ENCODE measurements at regions of chr1 and their contacts with region 1.

Region 1: GRCh38 chr1:47192458-47193384 is 2.9 kb upstream of the PDZK1IP1 start:
- DNase-seq: peak; percentile 75
- ATAC-seq: peak; percentile 77
- H3K4me3 Mint-ChIP-seq: no peak overlapping the region
- H3K27ac Mint-ChIP-seq: no peak overlapping the region
- H3K4me1 Mint-ChIP-seq: no peaks in the 10 kb centered on the region
- H3K27me3 Mint-ChIP-seq: peaks cover 3% of the 10 kb centered on the region

Region 2: GRCh38 chr1:46747683-46748288 is 444.9 kb before region 1 on chr1:
- CTCF ChIA-PET with region 1: no interaction called
- POLR2A ChIA-PET with region 1: no interaction called
- DNase-seq: no peak
- ATAC-seq: peak; percentile 49
- H3K4me3 Mint-ChIP-seq: no peak overlapping the region
- H3K27ac Mint-ChIP-seq: no peak overlapping the region
- H3K4me1 Mint-ChIP-seq: no peaks in the 10 kb centered on the region
- H3K27me3 Mint-ChIP-seq: peaks cover 34% of the 10 kb centered on the region

Region 3: DNA sequence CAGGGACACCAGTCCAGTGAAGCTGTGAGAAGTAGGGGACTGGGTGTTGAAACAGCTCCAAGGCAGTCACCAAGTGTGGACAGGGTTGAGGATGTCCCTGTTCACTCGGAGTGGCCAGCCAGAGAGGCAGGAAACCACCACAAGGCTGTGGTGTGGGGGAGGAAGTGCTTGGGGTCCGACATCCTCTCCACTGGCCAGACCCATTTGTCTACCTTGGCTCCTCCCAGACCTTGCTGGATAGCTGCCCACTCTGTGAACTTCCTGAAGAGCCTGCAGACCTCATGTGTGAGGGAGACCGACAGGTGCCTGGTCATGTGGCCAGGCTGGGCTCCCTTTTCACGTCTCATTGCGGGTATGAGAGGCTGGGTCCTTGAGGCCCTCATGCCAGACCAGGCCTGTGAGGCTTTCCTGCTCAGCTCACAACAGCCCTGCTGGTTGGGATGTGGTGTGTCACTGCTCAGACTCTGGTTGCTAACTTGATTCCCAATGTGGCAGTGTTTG is 372.1 kb before region 1 on chr1:
- CTCF ChIA-PET with region 1: no interaction called
- POLR2A ChIA-PET with region 1: no interaction called
- DNase-seq: no peak
- ATAC-seq: no peak
- H3K4me3 Mint-ChIP-seq: no peak overlapping the region
- H3K27ac Mint-ChIP-seq: no peak overlapping the region
- H3K4me1 Mint-ChIP-seq: peaks cover 10% of the 10 kb centered on the region
- H3K27me3 Mint-ChIP-seq: no peaks in the 10 kb centered on the region

Region 4: GRCh38 chr1:47113178-47113577 is 79.5 kb before region 1 on chr1:
- CTCF ChIA-PET with region 1: no interaction called
- POLR2A ChIA-PET with region 1: no interaction called
- DNase-seq: no peak
- ATAC-seq: no peak
- H3K4me3 Mint-ChIP-seq: no peak overlapping the region
- H3K27ac Mint-ChIP-seq: no peak overlapping the region
- H3K4me1 Mint-ChIP-seq: no peaks in the 10 kb centered on the region
- H3K27me3 Mint-ChIP-seq: peaks cover 2% of the 10 kb centered on the region

Region 5: DNA sequence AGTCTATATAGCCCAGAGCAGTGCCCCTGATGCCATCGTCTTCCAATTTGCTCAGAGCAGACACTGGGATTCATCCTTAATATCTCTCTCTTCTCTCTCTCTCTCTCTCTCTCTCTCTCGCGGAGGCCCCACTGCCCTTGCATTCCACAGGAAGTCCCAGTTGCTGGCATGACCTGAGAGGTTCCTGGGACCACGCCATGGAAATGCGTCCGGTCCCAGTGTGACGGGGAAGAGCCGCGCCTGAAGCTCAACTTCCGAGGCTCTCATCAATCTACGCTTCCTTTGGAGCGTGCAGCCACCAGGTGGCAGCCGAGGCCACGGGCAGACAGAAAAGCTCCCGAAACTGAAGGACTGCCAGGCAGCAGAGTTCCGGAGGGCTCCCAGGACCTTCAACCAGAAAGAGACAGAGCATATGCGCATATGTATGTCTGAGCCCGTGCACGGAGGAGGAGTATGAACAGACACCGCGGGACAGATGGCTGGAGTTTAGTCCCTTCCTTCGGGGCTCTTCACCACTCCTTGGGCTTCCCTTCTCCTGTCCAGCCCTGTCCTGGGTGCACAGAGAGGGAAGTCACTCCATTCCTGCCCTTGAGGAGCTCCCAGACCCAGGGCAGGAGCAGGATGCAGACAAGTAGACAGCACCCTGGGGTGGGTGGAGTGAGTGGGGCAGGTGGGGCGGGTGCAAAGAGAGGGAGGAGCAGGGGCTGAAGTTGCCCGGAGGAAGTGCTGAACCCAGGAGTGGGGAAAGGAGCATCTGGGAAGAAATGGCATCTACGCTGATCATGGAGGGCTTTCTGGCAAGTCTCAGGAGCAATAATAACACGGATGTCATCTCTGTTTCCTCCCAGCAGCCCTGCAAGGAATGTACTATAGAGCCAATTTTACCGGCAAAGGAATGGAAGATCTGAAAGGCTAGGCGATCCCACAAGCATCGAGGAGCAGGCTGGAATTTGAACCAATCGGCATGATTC is 13.4 kb before region 1 on chr1:
- CTCF ChIA-PET with region 1: interaction called, 59 read pairs
- POLR2A ChIA-PET with region 1: no interaction called
- DNase-seq: peak; percentile 85
- ATAC-seq: peak; percentile 85
- H3K4me3 Mint-ChIP-seq: peak overlapping the region; percentile 80
- H3K27ac Mint-ChIP-seq: peak overlapping the region; percentile 88
- H3K4me1 Mint-ChIP-seq: peaks cover 8% of the 10 kb centered on the region
- H3K27me3 Mint-ChIP-seq: peaks cover 26% of the 10 kb centered on the region

Region 6: GRCh38 chr1:47226121-47226838 is 33.6 kb after region 1 on chr1:
- CTCF ChIA-PET with region 1: interaction called, 11 read pairs
- POLR2A ChIA-PET with region 1: no interaction called
- DNase-seq: no peak
- ATAC-seq: no peak
- H3K4me3 Mint-ChIP-seq: no peak overlapping the region
- H3K27ac Mint-ChIP-seq: no peak overlapping the region
- H3K4me1 Mint-ChIP-seq: peaks cover 21% of the 10 kb centered on the region
- H3K27me3 Mint-ChIP-seq: peaks cover 57% of the 10 kb centered on the region

Region 7: GRCh38 chr1:47276850-47277249 is 84.1 kb after region 1 on chr1:
- CTCF ChIA-PET with region 1: no interaction called
- POLR2A ChIA-PET with region 1: no interaction called
- DNase-seq: no peak
- ATAC-seq: no peak
- H3K4me3 Mint-ChIP-seq: no peak overlapping the region
- H3K27ac Mint-ChIP-seq: no peak overlapping the region
- H3K4me1 Mint-ChIP-seq: peaks cover 7% of the 10 kb centered on the region
- H3K27me3 Mint-ChIP-seq: no peaks in the 10 kb centered on the region

Measured in activated CD8-positive, alpha-beta T cell treated with anti-CD3 and anti-CD28 coated beads, Interleukin-2, amount 10 ng/mL, durations not matched to agents 7 days and 5 days (primary cell).